ENCODE measurements at regions of chr2 and their contacts with region 1.

Region 1: DNA sequence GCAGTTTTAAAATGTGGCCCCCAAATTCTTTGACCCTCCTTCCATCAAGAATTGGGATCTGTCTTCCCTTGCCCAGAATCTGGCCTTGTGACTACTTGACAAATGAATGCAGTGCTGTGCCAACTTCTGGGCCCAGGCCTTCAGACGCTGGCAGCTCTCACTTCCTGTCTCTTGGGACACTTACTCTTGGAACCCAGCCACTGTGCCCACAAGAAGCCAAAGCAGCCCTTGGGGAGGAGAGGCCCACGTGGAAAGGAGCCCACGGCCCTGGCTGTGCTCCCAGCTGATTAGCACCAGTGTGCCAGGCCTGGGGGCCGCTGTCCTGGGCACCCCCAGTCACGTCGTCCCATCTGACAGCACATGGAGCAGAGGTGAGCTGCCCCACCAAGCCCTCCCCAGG is 56.6 kb downstream of the RPL37A start:
- DNase-seq: peak; percentile 72 to 93
- H3K4me3 ChIP-seq: peak overlapping the region in 1 of 2 donors; percentile 5
- H3K27ac ChIP-seq: peak overlapping the region; percentile 64 to 85
- H3K4me1 ChIP-seq: peaks cover 27 to 73% of the 10 kb centered on the region in 2 donors
- H3K27me3 ChIP-seq: no peaks in the 10 kb centered on the region
- CTCF ChIP-seq: no peak

Region 2: DNA sequence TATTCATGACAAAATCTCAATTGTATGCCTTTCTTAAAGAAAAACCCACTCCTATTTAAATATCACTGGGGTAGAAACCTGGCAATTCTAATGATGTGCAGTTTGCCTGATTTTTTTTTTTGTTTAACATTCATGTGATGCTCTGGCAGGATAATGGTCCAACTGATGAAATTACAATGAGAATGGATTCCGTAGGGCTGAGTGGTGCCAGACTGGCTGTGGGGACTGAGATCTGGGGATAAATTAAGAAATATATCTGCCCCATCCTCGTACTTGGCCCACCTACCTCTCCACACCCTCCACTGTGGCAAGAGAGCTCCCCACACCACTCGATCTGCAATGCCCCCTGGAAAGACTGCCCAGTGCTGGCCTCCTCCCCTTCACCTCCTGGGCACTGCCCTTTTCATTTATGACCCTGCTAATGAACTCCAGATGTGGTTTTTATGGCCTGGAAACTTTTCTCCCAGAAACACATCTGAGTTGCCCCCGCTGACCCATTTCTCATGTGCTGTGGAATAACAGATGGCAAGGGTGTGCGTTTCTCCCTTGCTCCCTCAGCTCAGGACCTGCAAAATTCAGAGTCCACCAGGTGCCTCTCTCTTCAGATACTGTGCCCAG is 89.6 kb before region 1 on chr2:
- intact Hi-C with region 1: no loop called
- DNase-seq: no peak
- H3K4me3 ChIP-seq: no peak overlapping the region
- H3K27ac ChIP-seq: no peak overlapping the region
- H3K4me1 ChIP-seq: no peaks in the 10 kb centered on the region
- H3K27me3 ChIP-seq: no peaks in the 10 kb centered on the region
- CTCF ChIP-seq: no peak

Region 3: DNA sequence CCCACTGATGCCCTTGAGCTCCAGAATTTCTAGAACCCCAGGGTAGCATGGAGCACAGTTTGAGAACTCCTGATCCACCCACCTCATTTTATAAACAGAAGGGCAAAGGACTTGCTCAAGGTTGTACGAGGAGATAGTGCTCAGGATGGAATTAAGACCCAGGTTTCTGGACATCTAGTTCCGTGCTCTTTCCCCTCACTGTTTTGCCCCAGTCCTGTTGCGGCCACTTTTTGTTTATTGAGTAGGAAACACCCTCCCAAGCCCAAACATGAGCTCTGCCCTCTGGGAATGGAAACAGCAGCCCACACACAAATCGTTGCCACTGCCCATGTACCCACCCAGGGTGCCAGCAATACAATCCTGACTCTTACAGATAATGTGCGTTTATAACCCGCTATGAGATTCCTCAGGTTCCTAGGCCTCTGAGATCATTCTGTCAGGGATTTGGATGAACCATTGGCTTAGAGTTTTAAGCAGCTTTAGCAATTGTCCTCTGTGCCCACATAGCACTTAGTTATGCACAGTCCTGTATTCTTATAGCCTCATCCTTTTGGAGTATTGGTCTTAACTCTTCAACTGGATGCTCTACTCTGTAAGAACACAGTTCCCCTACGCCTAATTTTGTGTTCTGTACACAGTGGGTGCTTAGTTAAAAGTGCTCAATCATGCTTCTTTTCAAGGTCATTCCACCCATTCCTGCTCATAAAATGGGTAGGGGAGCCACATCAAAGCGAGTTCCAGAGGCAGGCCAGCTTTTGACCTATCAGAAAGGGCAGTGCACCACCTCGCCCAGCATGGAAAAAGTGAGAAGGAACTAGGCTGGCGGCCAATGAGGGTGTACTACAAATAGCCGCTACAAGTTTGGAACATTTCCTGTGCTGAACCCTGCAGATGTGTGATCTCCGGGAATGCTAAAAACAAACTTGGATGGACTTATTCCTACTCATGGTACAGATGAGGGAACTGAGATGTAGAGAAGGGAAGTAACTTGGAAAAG is 17.6 kb after region 1 on chr2:
- intact Hi-C with region 1: loop called (anchors 2 kb)
- DNase-seq: peak; percentile 71 to 98
- H3K4me3 ChIP-seq: no peak overlapping the region
- H3K27ac ChIP-seq: peak overlapping the region; percentile 91 to 94
- H3K4me1 ChIP-seq: peaks cover 4 to 27% of the 10 kb centered on the region in 2 donors
- H3K27me3 ChIP-seq: no peaks in the 10 kb centered on the region
- CTCF ChIP-seq: no peak